Psoas muscle (tissue), 8 donors: ENCODE measurements at regions of chr3 and their contacts with region 1.

Region 1: GRCh38 chr3:4693620-4694019 is 200.5 kb downstream of the ITPR1 start:
- DNase-seq: no peak
- ATAC-seq: no peak
- H3K4me3 ChIP-seq: no peak overlapping the region
- H3K27ac ChIP-seq: no peak overlapping the region
- H3K4me1 ChIP-seq: no peaks in the 10 kb centered on the region
- H3K27me3 ChIP-seq: no peaks in the 10 kb centered on the region
- CTCF ChIP-seq: no peak

Region 2: GRCh38 chr3:3259181-3259580 is 1434.4 kb before region 1 on chr3:
- intact Hi-C with region 1: loop called in 1 of 2 experiments (anchors 5 kb)
- DNase-seq: no peak
- ATAC-seq: no peak
- H3K4me3 ChIP-seq: no peak overlapping the region
- H3K27ac ChIP-seq: no peak overlapping the region
- H3K4me1 ChIP-seq: no peaks in the 10 kb centered on the region
- H3K27me3 ChIP-seq: no peaks in the 10 kb centered on the region
- CTCF ChIP-seq: no peak